ENCODE measurements at regions of chr20 and their contacts with region 1.

Region 1: GRCh38 chr20:44642203-44643153 is 9.0 kb downstream of the ADA start:
- DNase-seq: peak; percentile 59
- ATAC-seq: no peak
- H3K4me3 ChIP-seq: no peak overlapping the region
- H3K4me3 Mint-ChIP-seq: peak overlapping the region; percentile 71
- H3K27ac ChIP-seq: peak overlapping the region; percentile 50 to 74
- H3K27ac Mint-ChIP-seq: peak overlapping the region; percentile 84
- H3K4me1 ChIP-seq: peaks cover 47 to 61% of the 10 kb centered on the region in 2 donors
- H3K4me1 Mint-ChIP-seq: peaks cover 62% of the 10 kb centered on the region
- H3K27me3 ChIP-seq: no peaks in the 10 kb centered on the region
- H3K27me3 Mint-ChIP-seq: no peaks in the 10 kb centered on the region
- CTCF ChIP-seq: no peak

Region 2: GRCh38 chr20:44041001-44041400 is 601.5 kb before region 1 on chr20:
- CTCF ChIA-PET with region 1: no interaction called
- POLR2A ChIA-PET with region 1: no interaction called
- intact Hi-C with region 1: no loop called
- DNase-seq: no peak
- ATAC-seq: no peak
- H3K4me3 ChIP-seq: no peak overlapping the region
- H3K4me3 Mint-ChIP-seq: no peak overlapping the region
- H3K27ac ChIP-seq: no peak overlapping the region
- H3K27ac Mint-ChIP-seq: no peak overlapping the region
- H3K4me1 ChIP-seq: no peaks in the 10 kb centered on the region
- H3K4me1 Mint-ChIP-seq: no peaks in the 10 kb centered on the region
- H3K27me3 ChIP-seq: peaks cover 0 to 7% (median 2%) of the 10 kb centered on the region in 4 experiments
- H3K27me3 Mint-ChIP-seq: peaks cover 57% of the 10 kb centered on the region
- CTCF ChIP-seq: no peak

Region 3: DNA sequence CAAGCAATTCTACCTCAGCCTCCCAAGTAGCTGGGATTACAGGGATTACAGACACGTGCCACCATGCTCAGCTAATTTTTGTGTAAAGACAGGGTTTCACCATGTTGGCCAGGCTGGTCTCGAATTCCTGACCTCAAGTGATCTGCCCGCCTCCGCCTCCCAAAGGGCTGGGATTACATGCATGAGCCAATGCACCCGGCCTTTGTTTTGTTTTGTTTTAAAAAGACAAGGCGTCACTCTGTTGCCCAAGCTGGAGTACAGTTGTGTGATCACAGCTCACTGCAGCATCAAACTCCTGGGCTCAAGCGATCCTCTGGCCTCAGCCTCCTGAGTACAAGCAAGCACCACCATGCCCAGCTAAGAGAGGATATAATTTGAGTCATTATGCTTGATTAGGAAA is 126.0 kb before region 1 on chr20:
- CTCF ChIA-PET with region 1: no interaction called
- POLR2A ChIA-PET with region 1: interaction called, 10 read pairs
- intact Hi-C with region 1: loop called (anchors 5 kb)
- DNase-seq: no peak
- ATAC-seq: no peak
- H3K4me3 ChIP-seq: no peak overlapping the region
- H3K4me3 Mint-ChIP-seq: no peak overlapping the region
- H3K27ac ChIP-seq: no peak overlapping the region
- H3K27ac Mint-ChIP-seq: no peak overlapping the region
- H3K4me1 ChIP-seq: peaks cover 18 to 20% of the 10 kb centered on the region in 2 donors
- H3K4me1 Mint-ChIP-seq: peaks cover 46% of the 10 kb centered on the region
- H3K27me3 ChIP-seq: no peaks in the 10 kb centered on the region
- H3K27me3 Mint-ChIP-seq: no peaks in the 10 kb centered on the region
- CTCF ChIP-seq: no peak

Region 4: DNA sequence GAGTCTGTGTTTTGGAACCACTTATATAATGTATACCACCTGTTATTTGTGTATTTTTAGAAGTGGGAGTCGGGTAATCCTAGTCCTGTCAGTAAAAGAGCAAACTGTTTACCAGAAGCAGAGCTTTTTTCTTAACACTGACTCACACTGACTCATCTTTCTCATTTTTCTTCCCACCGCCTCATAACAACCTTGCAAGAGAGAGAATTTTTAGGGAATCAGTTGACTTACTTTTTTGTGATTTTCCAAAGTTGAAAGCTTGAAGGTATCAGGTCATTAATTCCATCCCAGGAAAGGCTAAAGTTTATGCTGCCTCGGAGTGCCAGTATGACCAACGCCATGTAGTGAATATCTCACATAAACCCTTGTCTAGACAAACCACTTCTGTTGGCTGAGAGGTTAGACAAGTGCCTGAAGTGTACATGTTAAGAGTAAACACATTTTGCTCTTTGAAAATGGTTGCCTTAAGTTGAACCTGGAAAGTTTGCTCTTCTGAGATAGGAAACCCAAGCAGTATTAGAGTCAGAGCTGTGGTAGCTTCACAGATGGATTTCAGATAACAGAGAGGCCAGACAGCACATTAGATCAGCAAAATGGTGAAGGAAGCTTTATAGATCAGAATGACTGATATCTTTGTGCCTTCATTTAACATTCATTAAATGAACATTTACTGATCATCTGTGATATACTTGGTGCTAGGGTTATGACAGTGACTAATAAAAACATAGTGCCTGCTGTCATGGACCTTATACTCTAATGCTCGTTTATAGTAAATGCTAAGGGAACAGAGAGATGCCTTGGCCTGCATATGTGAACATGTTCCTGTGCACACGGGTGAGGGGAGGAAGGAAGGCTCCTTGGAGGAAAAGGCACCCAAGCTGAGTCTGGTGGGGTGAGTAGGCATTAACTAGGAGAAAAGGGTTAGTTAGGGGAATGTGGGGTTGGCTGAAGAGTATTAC is 89.2 kb before region 1 on chr20:
- CTCF ChIA-PET with region 1: no interaction called
- POLR2A ChIA-PET with region 1: no interaction called
- intact Hi-C with region 1: no loop called
- DNase-seq: no peak
- ATAC-seq: no peak
- H3K4me3 ChIP-seq: no peak overlapping the region
- H3K4me3 Mint-ChIP-seq: no peak overlapping the region
- H3K27ac ChIP-seq: no peak overlapping the region
- H3K27ac Mint-ChIP-seq: no peak overlapping the region
- H3K4me1 ChIP-seq: no peaks in the 10 kb centered on the region
- H3K4me1 Mint-ChIP-seq: no peaks in the 10 kb centered on the region
- H3K27me3 ChIP-seq: no peaks in the 10 kb centered on the region
- H3K27me3 Mint-ChIP-seq: no peaks in the 10 kb centered on the region
- CTCF ChIP-seq: no peak